SK-MEL-5 (cell line): ENCODE measurements at regions of chr7 and their contacts with region 1.

Region 1: GRCh38 chr7:44082541-44083207 is 344 bp upstream of the POLM start:
- DNase-seq: peak; percentile 100

Region 2: GRCh38 chr7:44163591-44163990 is 80.9 kb after region 1 on chr7:
- in situ Hi-C with region 1: no loop called
- DNase-seq: peak; percentile 65

Region 3: DNA sequence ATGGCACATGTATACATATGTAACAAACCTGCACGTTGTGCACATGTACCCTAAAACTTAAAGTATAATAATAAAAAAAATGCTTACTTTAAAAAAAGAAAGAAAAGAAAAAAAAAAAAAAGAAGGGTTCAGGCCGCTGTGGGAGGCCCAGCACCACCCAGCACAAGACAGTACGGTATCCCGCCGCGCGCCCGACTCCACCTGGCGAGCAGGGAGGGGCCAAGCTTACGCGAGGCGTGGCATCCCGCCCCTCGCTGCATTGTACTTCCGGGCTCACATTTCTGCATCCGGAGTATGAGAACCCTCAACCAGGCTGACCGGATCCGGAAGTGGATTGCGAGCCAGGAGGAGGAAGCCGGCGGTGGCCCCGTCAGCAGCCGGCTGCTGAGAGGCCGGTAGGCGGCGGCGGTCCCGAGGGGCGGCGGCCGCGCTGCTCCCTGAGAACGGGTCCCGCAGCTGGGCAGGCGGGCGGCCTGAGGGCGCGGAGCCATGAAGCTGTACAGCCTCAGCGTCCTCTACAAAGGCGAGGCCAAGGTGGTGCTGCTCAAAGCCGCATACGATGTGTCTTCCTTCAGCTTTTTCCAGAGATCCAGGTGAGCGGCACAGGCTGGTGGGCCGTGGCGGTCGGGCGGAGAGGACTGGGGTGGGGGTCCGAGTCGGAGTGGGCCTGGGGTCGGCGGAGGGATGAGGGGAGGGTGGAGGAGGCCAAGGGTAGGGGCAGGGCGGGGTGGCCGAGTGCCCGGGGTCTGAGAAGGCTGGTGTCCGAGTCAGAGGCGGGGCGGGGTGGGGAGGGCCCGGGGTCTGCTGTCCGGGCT is 118.2 kb after region 1 on chr7 and contains the start of gene YKT6:
- in situ Hi-C with region 1: loop called (anchors 25 kb)
- DNase-seq: peak; percentile 99
- total RNA-seq, gene YKT6: 159 and 163 TPM in 2 replicates